Endothelial cell of umbilical vein (primary cell): ENCODE measurements at regions of chr11 and their contacts with region 1.

Region 1: DNA sequence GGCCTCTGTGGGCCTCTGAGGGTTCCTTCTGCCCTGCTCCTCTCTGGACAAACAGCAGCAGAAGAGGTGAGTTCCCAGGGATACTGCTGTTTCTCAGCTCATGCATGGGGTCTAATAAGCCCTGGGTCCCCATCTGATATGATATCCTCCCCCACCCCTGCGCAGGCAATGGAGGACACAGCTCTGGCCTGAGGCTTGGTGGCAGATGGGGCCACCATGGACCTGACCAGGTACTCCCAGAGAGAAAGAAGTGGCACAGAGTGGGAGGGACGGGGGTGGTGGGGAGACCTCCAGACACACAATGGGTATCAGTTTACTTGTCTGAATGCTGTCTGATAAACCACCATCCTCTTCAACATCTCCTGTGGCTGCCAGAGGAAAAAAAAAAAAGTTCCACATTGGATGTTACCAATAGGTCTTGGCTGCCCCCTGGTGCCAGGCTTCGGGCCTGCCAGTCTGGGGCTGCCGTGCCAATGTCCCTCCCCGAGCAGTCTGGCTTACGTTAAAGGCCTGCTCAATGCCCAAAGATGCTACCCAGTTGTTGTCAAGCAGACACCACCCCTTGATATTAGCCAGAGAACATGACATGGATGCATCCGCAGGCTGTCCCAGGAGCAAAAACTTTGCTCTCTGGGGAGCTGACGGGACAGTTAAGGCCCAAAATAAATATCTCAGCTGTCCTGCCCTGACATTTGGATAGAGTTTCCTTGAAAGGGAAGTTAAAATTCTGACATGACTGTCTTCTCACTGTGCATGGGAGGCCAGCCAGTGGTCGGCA is 27.9 kb upstream of the ABCC8 start:
- DNase-seq: peak; percentile 60
- H3K4me3 ChIP-seq: no peak overlapping the region
- H3K27ac ChIP-seq: no peak overlapping the region
- H3K4me1 ChIP-seq: no peaks in the 10 kb centered on the region
- H3K27me3 ChIP-seq: no peaks in the 10 kb centered on the region
- CTCF ChIP-seq: peak; percentile 78 to 90
- POLR2A ChIP-seq: no peak

Region 2: GRCh38 chr11:17129003-17129402 is 375.5 kb before region 1 on chr11:
- CTCF ChIA-PET with region 1: no interaction called
- POLR2A ChIA-PET with region 1: no interaction called
- dilution Hi-C with region 1: no loop called
- intact Hi-C with region 1: no loop called
- DNase-seq: no peak
- H3K4me3 ChIP-seq: no peak overlapping the region
- H3K27ac ChIP-seq: no peak overlapping the region
- H3K4me1 ChIP-seq: peaks cover 2% of the 10 kb centered on the region
- H3K27me3 ChIP-seq: no peaks in the 10 kb centered on the region
- CTCF ChIP-seq: no peak
- POLR2A ChIP-seq: no peak

Region 3: DNA sequence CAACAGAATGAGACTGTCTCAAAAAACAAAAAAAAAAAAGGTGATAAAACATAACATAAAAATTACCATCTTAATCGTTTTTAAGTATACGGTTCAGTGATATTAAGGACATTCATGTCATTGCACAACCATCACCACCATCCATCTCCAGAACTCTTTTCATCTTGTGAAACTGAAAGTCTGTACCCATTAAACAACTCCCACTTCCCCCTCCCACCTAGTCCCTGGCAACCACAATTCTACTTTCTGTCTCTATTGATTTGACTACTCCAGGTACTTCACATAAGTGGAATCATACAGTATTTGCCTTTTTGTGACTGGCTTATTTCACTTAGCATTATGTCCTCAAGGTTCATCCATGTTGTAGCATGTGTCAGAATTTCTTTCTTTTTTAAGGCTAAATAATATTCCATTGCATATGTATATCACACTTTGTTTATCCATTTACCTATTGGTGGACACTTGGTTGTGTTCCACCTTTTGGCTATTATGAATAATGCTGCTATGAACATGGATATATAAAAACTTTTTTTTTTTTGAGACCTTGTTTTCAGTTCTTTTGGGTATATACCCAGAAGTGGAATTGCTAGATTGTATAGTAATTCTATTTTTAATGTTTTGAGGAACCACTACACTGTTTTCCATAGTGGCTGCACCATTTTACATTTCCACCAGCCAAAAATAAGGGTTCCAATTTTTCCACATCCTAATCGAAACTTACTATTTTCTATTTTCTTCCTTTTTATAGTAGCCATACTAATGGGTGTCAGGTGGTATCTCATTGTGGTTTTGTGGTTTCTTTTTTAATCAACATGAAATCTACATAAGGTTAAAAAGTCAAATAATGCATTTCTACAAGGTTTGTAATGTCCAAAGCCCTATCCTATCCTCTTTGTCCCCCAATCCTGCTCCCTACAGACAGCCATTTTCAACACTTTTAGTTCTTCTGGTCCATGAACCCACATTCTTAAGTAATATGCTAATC is 273.4 kb before region 1 on chr11:
- CTCF ChIA-PET with region 1: interaction called, 15 read pairs
- POLR2A ChIA-PET with region 1: no interaction called
- dilution Hi-C with region 1: no loop called
- intact Hi-C with region 1: loop called (anchors 1 kb)
- DNase-seq: no peak
- H3K4me3 ChIP-seq: no peak overlapping the region
- H3K27ac ChIP-seq: no peak overlapping the region
- H3K4me1 ChIP-seq: peaks cover 3% of the 10 kb centered on the region
- H3K27me3 ChIP-seq: no peaks in the 10 kb centered on the region
- CTCF ChIP-seq: no peak
- POLR2A ChIP-seq: no peak

Region 4: GRCh38 chr11:17384002-17384511 is 120.5 kb before region 1 on chr11:
- CTCF ChIA-PET with region 1: interaction called, 184 read pairs
- POLR2A ChIA-PET with region 1: no interaction called
- dilution Hi-C with region 1: no loop called
- intact Hi-C with region 1: loop called (anchors 1 kb)
- DNase-seq: peak; percentile 66
- H3K4me3 ChIP-seq: no peak overlapping the region
- H3K27ac ChIP-seq: no peak overlapping the region
- H3K4me1 ChIP-seq: no peaks in the 10 kb centered on the region
- H3K27me3 ChIP-seq: no peaks in the 10 kb centered on the region
- CTCF ChIP-seq: peak; percentile 82 to 87
- POLR2A ChIP-seq: no peak

Region 5: DNA sequence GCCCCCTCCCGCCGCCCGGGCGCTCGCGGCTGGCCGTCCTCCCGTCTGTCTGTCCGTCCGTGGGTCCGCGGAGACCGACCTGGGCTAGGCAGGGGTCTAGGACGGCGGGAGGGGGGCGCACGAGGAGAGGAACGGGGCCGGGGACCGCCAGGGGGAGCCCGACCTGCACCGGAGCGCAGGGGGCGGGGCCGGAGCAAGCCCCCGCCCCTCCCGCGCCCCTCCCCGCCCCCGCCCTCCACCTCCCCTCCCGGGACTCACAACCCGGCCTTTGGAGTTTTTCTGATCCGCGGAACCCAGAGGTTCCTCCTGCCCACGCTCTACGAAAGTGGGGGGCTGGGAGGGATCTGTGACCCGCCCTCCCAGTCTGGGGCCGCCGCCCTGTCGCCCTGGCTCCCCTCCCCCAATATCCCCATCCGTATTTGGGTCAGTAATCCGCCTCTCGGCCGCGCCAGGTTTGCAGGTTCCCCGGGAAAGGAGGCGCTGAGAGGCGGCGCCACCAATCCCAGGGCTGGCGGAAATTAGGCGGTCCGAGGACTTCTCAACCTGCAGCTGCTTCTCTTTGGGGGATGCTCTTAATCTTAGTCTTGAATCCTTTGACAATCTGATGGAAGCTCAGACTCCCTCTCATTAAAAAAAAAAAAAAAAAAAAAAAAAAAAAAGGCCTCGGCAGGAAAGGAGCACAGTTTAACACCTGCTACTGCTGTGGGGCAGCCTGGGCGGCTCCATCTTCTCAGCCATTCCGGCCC is 115.1 kb before region 1 on chr11:
- CTCF ChIA-PET with region 1: interaction called, 184 read pairs
- POLR2A ChIA-PET with region 1: no interaction called
- dilution Hi-C with region 1: no loop called
- intact Hi-C with region 1: loop called (anchors 1 kb)
- DNase-seq: peak; percentile 43
- H3K4me3 ChIP-seq: peak overlapping the region in 1 of 3 experiments; percentile 39
- H3K27ac ChIP-seq: no peak overlapping the region
- H3K4me1 ChIP-seq: no peaks in the 10 kb centered on the region
- H3K27me3 ChIP-seq: peaks cover 8 to 14% of the 10 kb centered on the region in 2 experiments
- CTCF ChIP-seq: peak; percentile 34 to 73
- POLR2A ChIP-seq: no peak

Region 6: DNA sequence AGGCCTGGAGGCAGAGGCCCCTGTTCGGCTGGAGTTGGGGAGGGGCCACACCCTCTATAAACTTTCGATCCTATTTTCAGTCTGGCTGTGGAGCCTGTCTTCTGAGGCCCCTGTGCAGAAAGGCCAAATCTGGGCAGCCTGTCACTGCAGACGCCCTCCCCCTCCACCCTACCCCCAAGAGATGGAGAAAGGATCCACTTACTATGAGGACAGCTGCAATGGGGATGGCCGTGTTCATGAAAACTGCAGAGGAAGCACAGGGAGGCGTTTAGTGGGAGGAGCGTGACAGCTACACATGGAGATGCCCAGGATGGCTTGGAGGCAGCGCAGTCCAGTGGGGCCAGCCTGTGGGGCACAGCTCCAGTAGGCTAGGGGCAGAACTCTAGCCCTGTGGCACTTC is 72.5 kb before region 1 on chr11:
- CTCF ChIA-PET with region 1: no interaction called
- POLR2A ChIA-PET with region 1: no interaction called
- dilution Hi-C with region 1: no loop called
- intact Hi-C with region 1: no loop called
- DNase-seq: no peak
- H3K4me3 ChIP-seq: no peak overlapping the region
- H3K27ac ChIP-seq: no peak overlapping the region
- H3K4me1 ChIP-seq: no peaks in the 10 kb centered on the region
- H3K27me3 ChIP-seq: peaks cover 0 to 5% of the 10 kb centered on the region in 2 experiments
- CTCF ChIP-seq: no peak
- POLR2A ChIP-seq: no peak

Region 7: GRCh38 chr11:17519061-17519885 is 14.8 kb after region 1 on chr11:
- CTCF ChIA-PET with region 1: interaction called, 11 read pairs
- POLR2A ChIA-PET with region 1: no interaction called
- dilution Hi-C with region 1: no loop called
- intact Hi-C with region 1: no loop called
- DNase-seq: no peak
- H3K4me3 ChIP-seq: no peak overlapping the region
- H3K27ac ChIP-seq: no peak overlapping the region
- H3K4me1 ChIP-seq: no peaks in the 10 kb centered on the region
- H3K27me3 ChIP-seq: peaks cover 0 to 3% of the 10 kb centered on the region in 2 experiments
- CTCF ChIP-seq: no peak
- POLR2A ChIP-seq: no peak

Region 8: GRCh38 chr11:17932472-17932871 is 428.0 kb after region 1 on chr11:
- CTCF ChIA-PET with region 1: no interaction called
- POLR2A ChIA-PET with region 1: no interaction called
- dilution Hi-C with region 1: no loop called
- intact Hi-C with region 1: no loop called
- DNase-seq: no peak
- H3K4me3 ChIP-seq: no peak overlapping the region
- H3K27ac ChIP-seq: no peak overlapping the region
- H3K4me1 ChIP-seq: no peaks in the 10 kb centered on the region
- H3K27me3 ChIP-seq: no peaks in the 10 kb centered on the region
- CTCF ChIP-seq: peak in 1 of 2 donors; percentile 3
- POLR2A ChIP-seq: no peak